AG04450 (cell line): ENCODE measurements at regions of chr7 and their contacts with region 1.

Region 1: DNA sequence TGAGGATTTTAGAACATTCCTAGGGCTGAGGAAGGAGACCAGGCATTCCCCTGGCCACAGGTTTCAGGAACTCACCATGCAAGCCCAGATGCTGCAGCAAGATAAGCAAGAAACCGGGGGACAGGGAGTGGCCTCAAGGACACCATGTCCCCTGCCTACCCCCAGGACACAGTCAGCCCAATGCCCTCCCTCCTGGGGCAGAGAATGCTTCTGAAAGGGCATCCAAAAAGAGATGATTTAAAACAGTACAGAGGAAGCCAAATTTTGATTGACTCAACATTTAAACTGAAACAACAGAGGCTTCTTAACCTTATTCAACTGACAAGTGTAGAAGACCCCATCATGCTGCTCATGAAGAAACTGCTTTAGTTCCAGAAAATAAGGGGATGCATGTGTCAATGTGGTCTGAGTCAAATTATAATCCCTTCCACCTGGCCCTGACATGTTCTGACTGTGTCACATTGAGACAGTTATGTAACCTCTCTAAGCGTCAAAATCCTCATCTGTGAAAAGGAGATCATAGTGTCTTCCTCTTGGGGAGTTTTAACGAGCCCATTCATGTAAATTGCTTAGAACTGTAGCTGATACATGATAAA is 60.0 kb downstream of the ICA1 start:
- DNase-seq: no peak
- H3K4me3 ChIP-seq: no peak overlapping the region
- H3K27ac ChIP-seq: no peak overlapping the region
- H3K27me3 ChIP-seq: peaks cover 2% of the 10 kb centered on the region
- CTCF ChIP-seq: no peak

Region 2: DNA sequence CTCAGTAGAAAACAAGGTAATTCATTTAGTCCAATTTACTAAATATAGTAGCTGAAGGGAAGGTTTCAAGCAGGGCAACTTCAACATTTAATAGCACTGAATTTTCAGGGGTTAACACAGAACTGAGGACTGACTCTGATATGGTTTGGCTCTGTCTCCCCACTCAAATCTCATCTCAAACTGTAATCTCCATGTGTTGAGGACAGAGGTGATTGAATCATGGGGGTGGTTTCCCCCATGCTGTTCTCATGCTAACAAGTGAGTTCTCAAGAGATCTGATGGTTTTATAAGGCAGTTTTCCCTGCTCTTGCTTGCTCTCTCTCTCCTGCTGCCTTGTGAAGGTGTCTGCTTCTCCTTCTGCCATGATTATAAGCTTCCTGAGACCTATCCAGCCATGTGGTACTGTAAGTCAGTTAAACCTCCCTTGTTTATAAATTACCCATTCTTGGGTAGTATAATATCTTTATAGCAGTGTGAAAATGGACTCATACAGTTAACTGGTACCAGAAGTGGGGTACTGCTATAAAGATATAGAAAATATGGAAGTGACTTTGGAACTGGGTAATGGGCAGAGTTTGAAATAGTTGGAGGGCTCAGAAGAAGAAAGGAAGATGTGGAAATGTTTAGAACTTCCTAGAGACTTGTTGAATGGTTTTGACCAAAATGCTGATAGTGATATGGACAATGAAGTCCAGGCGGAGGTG is 571.2 kb before region 1 on chr7:
- CTCF ChIA-PET with region 1: interaction called, 11 read pairs
- POLR2A ChIA-PET with region 1: no interaction called
- DNase-seq: no peak
- H3K4me3 ChIP-seq: no peak overlapping the region
- H3K27ac ChIP-seq: no peak overlapping the region
- H3K27me3 ChIP-seq: no peaks in the 10 kb centered on the region
- CTCF ChIP-seq: no peak